SK-N-SH (cell line): ENCODE measurements at regions of chr10 and their contacts with region 1.

Region 1: GRCh38 chr10:79068562-79069324 is at the start of gene ZMIZ1:
- DNase-seq: peak; percentile 88
- H3K4me3 ChIP-seq: peak within 1 kb of the TSS; percentile 93 to 99
- H3K27ac ChIP-seq: peak within 1 kb of the TSS; percentile 88 to 97
- H3K4me1 ChIP-seq: peaks cover 9 to 43% of the 10 kb centered on the region in 2 experiments
- H3K27me3 ChIP-seq: no peaks in the 10 kb centered on the region
- CTCF ChIP-seq: 0 out of 2 replicates have a peak, but pooled peaks have one; percentile 1
- EP300 ChIP-seq: peak in 1 of 2 experiments; percentile 32; a peak in 1 of 4 replicates
- RAD21 ChIP-seq: peak; percentile 29
- polyA plus RNA-seq, gene ZMIZ1: 6.6 and 23.5 TPM in 2 replicates

Region 2: DNA sequence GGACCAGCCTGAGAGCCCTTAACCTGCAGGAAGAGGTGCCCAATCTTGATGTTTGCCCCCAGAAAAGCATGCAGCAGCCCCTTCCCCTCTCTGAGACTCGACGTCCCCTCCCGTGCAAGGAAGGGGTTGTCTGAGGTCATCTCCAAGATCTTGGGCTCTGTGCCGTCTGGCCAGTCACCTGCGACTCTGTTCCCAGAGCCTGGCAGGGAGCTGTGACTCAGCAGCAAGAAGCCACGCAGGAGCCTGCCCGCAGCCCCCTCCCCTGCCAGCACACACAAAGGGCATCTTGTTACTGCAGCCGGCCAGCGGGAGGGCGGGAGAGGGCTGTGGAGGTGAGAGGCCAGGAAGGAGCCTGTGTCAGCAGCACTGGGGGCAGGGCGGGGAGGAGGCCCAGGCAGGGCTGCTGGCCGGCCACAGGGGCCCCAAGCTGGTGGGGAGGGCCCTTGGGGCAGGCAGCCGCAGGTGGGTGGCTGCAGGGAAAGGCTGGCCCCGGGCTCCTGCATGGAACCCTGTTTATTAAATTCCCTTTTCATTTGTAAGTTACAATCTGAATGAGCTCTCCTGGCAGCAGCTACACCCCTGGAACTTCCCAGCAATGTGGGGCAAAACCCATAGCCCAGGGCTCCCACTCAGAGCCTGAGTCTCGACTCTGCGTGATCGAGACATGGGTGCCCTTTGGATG is 103.7 kb before region 1 on chr10:
- CTCF ChIA-PET with region 1: interaction called, 31 read pairs
- POLR2A ChIA-PET with region 1: interaction called, 4 read pairs
- DNase-seq: peak; percentile 78
- H3K4me3 ChIP-seq: no peak overlapping the region; a peak in 1 of 4 replicates
- H3K27ac ChIP-seq: peak overlapping the region; percentile 59 to 99
- H3K4me1 ChIP-seq: peaks cover 33 to 93% of the 10 kb centered on the region in 2 experiments
- H3K27me3 ChIP-seq: no peaks in the 10 kb centered on the region
- CTCF ChIP-seq: no peak
- EP300 ChIP-seq: peak in 1 of 2 experiments; percentile 95; a peak in 3 of 4 replicates
- RAD21 ChIP-seq: peak; percentile 30; the same call in 1 of the 2 replicates

Region 3: GRCh38 chr10:79007421-79008319 is 61.1 kb before region 1 on chr10:
- CTCF ChIA-PET with region 1: no interaction called
- POLR2A ChIA-PET with region 1: no interaction called
- DNase-seq: no peak
- H3K4me3 ChIP-seq: no peak overlapping the region
- H3K27ac ChIP-seq: peak overlapping the region in 1 of 2 experiments; percentile 8; a peak in 2 of 4 replicates
- H3K4me1 ChIP-seq: peaks cover 0 to 68% of the 10 kb centered on the region in 2 experiments; a peak in 2 of 4 replicates
- H3K27me3 ChIP-seq: no peaks in the 10 kb centered on the region
- CTCF ChIP-seq: no peak
- EP300 ChIP-seq: no peak
- RAD21 ChIP-seq: no peak

Region 4: GRCh38 chr10:79023240-79024162 is 45.2 kb before region 1 on chr10:
- CTCF ChIA-PET with region 1: interaction called, 15 read pairs
- POLR2A ChIA-PET with region 1: interaction called, 11 read pairs
- DNase-seq: no peak
- H3K4me3 ChIP-seq: no peak overlapping the region
- H3K27ac ChIP-seq: peak overlapping the region in 1 of 2 experiments; percentile 98; a peak in 2 of 4 replicates
- H3K4me1 ChIP-seq: peaks cover 0 to 77% of the 10 kb centered on the region in 2 experiments; a peak in 2 of 4 replicates
- H3K27me3 ChIP-seq: no peaks in the 10 kb centered on the region
- CTCF ChIP-seq: no peak
- EP300 ChIP-seq: no peak
- RAD21 ChIP-seq: no peak